Activated naive CD4-positive, alpha-beta T cell treated with anti-CD3 and anti-CD28 coated beads for 36 hours (primary cell): ENCODE measurements at regions of chr2 and their contacts with region 1.

Region 1: GRCh38 chr2:54115284-54116137 is at the start of gene ACYP2:
- DNase-seq: peak; percentile 95
- H3K4me3 Mint-ChIP-seq: peak within 1 kb of the TSS; percentile 97
- H3K27ac Mint-ChIP-seq: peak within 1 kb of the TSS; percentile 100
- H3K4me1 Mint-ChIP-seq: peaks cover 11% of the 10 kb centered on the region
- H3K27me3 Mint-ChIP-seq: no peaks in the 10 kb centered on the region
- total RNA-seq, gene ACYP2: 6.8 to 7.3 TPM

Region 2: DNA sequence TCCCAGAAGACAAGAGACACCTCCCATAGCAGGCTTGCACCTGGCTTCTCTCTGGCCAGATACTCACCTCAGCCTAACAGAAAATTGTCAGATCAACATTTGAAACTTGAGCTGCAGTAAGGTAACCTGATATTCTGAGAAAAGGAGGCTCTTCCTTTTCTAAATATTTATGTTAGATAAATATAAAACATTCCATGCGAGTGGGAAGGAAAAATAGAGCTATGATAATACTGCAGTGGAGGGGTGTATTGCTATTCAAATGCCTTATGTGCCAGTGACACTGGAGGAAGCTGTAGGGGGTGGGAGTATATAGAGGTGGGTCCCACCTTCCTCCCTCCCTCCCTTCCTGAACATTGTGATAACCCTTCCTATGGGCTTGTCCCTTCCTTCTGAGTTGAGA is 863.4 kb before region 1 on chr2:
- CTCF ChIA-PET with region 1: no interaction called
- intact Hi-C with region 1: no loop called
- DNase-seq: no peak
- H3K4me3 Mint-ChIP-seq: no peak overlapping the region
- H3K27ac Mint-ChIP-seq: no peak overlapping the region
- H3K4me1 Mint-ChIP-seq: no peaks in the 10 kb centered on the region
- H3K27me3 Mint-ChIP-seq: no peaks in the 10 kb centered on the region

Region 3: GRCh38 chr2:54271843-54272627 is 156.5 kb after region 1 on chr2:
- CTCF ChIA-PET with region 1: no interaction called
- intact Hi-C with region 1: loop called (anchors 1 kb)
- DNase-seq: no peak
- H3K4me3 Mint-ChIP-seq: no peak overlapping the region
- H3K27ac Mint-ChIP-seq: no peak overlapping the region
- H3K4me1 Mint-ChIP-seq: peaks cover 15% of the 10 kb centered on the region
- H3K27me3 Mint-ChIP-seq: no peaks in the 10 kb centered on the region

Region 4: DNA sequence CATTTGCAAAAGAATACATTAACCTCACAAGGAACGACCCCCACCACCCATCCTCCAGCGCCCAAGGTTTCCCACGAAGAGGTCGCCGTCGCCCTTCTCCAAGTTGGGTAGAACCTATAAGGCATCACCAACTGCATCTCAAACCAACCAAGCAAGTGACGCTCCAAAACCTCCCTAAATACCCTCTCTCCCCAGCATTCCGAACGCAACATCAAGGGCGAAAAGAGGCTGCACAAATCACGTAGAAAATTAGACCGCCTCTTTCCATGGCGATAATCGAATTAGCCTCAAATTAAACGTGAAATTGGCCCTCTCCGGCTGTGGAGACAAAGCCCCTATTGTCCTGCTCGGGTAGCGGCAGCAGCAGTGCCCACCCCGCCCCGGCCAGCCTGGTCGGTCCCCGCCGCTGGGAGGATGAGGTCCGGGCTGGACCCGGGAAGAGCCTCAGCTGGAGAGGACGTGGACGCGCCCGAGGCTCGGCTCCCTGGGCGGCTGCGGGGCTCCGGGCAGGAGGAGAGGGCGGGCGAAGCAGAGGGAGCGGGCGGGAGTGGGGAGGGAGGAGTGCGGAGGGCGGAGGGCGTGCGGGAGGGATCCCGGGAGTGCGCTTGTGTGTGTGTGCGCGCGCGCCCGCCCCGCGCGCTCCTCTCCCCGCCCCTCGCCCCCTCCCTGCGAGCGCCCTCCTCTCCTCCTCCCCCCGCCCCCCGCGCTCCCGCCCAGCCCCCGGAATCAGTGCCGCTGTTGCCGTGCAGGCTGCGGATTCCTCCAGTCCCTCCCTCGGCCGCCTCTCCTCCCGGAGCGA is 340.3 kb after region 1 on chr2 and contains the start of gene SPTBN1:
- CTCF ChIA-PET with region 1: no interaction called
- intact Hi-C with region 1: loop called (anchors 2 kb)
- DNase-seq: peak; percentile 34
- H3K4me3 Mint-ChIP-seq: peak within 1 kb of the TSS; percentile 77
- H3K27ac Mint-ChIP-seq: no peak within 1 kb of the TSS
- H3K4me1 Mint-ChIP-seq: peaks cover 13% of the 10 kb centered on the region
- H3K27me3 Mint-ChIP-seq: peaks cover 38% of the 10 kb centered on the region
- total RNA-seq, gene SPTBN1: 103 to 107 TPM

Region 5: DNA sequence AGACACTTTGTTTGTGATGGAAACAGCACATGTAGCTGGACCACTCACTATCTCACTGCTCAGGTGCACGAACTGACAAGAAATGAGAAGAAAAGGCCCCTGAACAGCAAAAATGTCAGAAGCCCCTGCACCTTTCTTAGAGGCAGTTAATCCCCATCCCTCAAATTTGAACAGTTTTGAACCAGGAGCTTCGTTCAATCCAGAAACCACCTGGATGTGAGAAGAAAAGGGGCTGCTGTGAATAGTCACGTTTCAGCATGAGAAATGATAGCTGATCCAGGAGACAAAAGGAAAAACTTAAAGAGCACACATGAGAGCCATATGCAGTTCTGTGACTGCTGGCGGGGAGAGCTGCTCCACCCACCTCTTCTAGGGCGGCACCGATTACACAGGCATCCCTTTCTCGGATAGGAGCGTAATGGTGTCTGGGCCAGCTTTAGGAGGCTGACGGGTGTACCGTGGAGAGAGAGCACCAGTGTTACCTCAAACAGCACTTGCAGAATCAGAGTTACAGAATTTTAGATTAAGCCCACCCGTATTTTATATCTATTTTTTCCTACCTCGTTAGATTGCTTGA is 491.0 kb after region 1 on chr2:
- CTCF ChIA-PET with region 1: no interaction called
- intact Hi-C with region 1: loop called (anchors 5 kb)
- DNase-seq: peak; percentile 79
- H3K4me3 Mint-ChIP-seq: peak overlapping the region; percentile 53
- H3K27ac Mint-ChIP-seq: peak overlapping the region; percentile 80
- H3K4me1 Mint-ChIP-seq: peaks cover 84% of the 10 kb centered on the region
- H3K27me3 Mint-ChIP-seq: no peaks in the 10 kb centered on the region